ENCODE measurements at regions of chr11 and their contacts with region 1.

Region 1: DNA sequence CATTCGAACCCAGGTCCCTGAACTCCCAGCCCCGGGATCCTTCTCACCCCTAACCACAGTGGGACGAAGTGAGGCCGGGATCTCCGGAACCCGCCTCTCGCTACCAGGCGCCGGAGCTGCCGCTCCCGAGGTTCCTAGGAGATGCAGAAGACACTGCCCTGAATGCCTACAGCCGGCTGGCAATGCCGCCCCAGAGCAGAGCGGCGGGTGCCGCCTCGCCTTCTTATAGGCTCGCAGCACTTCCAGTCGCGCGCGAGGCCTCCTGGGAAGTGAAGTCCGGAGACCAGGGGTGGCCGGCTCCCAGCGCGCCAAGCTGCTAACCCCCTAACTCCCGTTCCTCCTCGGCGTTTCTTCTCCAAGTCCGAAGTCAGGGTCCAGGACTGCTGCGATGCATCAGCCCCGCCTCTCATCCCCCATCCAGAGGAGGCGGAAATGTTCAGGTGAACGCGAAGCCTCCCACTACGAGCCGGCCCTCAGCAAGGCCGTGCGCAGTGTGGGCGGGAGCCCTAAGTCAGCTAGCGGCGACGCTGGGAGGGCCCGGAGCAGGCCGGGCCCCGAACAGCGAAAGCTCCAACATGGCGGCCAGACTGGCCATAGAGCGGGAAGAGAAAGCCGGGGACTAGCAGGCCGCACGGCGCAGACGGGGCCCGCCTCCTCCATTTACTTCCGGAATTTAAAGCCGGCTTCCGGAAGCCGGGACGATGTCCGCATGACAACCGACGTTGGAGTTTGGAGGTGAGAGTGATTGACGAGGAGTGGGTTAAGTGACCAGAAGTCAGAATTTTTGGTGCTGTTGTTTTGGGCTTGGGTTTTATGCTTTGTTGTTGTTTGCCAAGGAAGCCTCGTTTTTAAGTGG is at the starts of genes CYB561A3 and TMEM138:
- DNase-seq: peak; percentile 91

Region 2: GRCh38 chr11:61315260-61315659 is 46.7 kb before region 1 on chr11:
- CTCF ChIA-PET with region 1: no interaction called
- POLR2A ChIA-PET with region 1: no interaction called
- DNase-seq: no peak

Region 3: DNA sequence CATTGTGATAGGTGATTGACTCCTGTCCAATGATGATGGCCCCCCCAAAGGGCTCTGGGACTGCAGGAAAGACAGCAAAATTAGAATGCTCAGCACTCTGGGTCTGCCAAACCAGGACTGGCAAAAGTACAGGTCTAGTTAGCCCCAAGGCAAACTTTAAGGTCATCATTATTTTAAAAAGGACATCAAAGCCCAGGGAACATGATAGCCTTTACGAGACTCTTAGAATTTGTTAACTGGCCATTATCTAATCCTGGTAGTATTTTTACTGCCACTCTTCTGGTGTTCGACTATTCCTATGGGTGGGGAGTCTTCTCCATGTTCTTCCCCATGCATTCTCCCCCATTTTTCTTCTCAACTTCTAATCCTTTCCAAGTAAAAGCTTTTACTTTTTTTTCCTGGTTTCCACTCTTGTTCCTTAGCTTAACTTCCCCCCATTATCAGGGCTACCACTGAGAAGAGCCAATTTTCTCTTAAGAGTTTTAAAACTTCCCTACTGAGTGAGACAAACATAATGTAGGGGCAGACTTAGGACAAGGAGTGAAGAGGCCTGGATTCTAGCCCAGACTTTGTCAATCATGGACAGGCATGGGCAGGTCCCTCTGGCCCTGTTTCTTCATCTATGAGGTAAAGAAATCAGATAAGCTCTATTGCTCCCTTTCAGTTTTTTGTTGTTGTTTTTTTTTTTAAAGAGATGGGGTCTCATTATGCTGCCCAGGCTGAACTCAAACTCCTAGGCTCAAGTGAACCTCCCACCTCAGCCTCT is 36.1 kb before region 1 on chr11:
- CTCF ChIA-PET with region 1: no interaction called
- POLR2A ChIA-PET with region 1: interaction called, 15 read pairs
- DNase-seq: no peak

Region 4: DNA sequence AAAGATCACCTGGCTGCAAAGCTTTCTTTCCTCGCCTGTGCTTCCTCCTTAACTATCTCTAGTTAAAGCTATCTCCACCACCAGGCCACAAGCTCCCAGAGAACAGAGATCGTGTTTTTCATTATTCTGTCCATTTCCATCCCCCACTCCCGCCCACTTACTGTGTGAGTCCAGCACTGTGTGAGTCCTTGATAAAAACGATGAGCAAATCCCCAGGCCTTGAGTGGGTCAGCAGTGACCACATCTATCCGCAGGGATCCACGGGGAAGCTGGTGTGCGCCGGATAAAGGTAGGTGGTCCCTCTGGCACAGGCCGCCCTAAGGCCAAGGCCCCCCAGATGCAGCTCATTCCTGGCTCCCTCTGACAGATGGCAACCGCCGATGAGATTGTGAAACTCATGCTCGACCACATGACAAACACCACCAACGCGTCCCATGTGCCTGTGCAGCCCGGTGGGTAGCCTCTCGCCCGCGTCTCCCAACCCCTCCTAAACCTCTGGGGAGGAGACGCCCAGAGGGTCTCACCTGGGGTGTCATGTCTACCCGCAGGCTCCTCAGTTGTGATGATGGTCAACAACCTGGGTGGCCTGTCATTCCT is 19.6 kb before region 1 on chr11:
- CTCF ChIA-PET with region 1: no interaction called
- POLR2A ChIA-PET with region 1: interaction called, 103 read pairs
- DNase-seq: no peak

Region 5: GRCh38 chr11:61384271-61385242 is 22.6 kb after region 1 on chr11:
- CTCF ChIA-PET with region 1: interaction called, 16 read pairs
- POLR2A ChIA-PET with region 1: interaction called, 55 read pairs
- DNase-seq: peak; percentile 30

Region 6: GRCh38 chr11:61429691-61430582 is 68.0 kb after region 1 on chr11 and contains the starts of genes CPSF7 and SDHAF2:
- CTCF ChIA-PET with region 1: no interaction called
- POLR2A ChIA-PET with region 1: interaction called, 19 read pairs
- DNase-seq: peak; percentile 95

Measured in HEK293T (cell line).